Heart right ventricle (tissue), 16 donors: ENCODE measurements at regions of chr6 and their contacts with region 1.

Region 1: GRCh38 chr6:141677598-141678211 is 455.0 kb upstream of the GJE1 start:
- DNase-seq: no peak
- ATAC-seq: no peak
- H3K4me3 ChIP-seq: no peak overlapping the region
- H3K27ac ChIP-seq: no peak overlapping the region
- H3K4me1 ChIP-seq: no peaks in the 10 kb centered on the region
- H3K27me3 ChIP-seq: no peaks in the 10 kb centered on the region
- CTCF ChIP-seq: peak in 8 of 9 donors; percentile 33 to 64 (median 57)

Region 2: DNA sequence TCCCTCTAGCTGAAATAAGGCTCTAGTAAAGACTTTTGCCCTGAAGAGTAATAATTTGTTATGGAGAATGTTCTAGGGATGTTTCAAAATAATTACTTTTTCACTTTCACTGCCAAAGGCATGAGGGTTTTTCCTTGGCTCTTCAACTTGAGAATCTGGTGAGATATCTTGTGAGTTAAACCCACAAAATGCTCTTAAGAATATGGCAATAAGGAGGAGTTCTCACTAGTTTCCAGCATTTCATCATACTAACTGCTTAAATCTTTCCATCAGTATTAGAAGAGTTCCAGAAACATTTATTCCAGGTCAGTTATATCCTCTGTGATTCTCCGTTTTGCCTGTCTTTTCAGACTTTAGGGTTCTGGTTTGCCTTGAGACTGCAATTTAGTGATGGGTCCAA is 330.6 kb before region 1 on chr6:
- intact Hi-C with region 1: no loop called
- DNase-seq: no peak
- ATAC-seq: no peak
- H3K4me3 ChIP-seq: no peak overlapping the region
- H3K27ac ChIP-seq: no peak overlapping the region
- H3K4me1 ChIP-seq: no peaks in the 10 kb centered on the region
- H3K27me3 ChIP-seq: no peaks in the 10 kb centered on the region
- CTCF ChIP-seq: no peak

Region 3: DNA sequence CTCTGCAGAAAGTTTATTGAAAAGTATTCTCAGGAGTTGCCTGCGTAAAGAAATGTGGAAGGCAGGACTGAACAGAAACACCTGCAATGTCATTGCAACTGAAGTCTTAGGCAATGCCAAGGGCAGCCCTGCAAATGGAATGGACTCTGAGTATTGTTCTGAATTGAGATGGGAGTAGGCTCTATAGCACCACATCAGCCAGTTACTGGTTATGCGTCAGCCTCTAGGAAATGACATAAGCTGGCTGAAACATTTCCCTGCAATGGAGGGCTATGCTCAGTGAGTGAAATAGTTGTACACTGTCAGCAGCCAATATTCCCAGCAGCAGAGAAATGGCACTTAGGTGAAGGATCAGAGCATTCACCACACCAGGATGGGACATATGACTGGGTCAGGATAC is 441.2 kb after region 1 on chr6:
- intact Hi-C with region 1: loop called in 6 of 10 experiments (anchors 5 to 10 kb)
- DNase-seq: no peak
- ATAC-seq: no peak
- H3K4me3 ChIP-seq: no peak overlapping the region
- H3K27ac ChIP-seq: no peak overlapping the region
- H3K4me1 ChIP-seq: no peaks in the 10 kb centered on the region
- H3K27me3 ChIP-seq: no peaks in the 10 kb centered on the region
- CTCF ChIP-seq: no peak